ENCODE measurements at regions of chr16 and their contacts with region 1.

Region 1: DNA sequence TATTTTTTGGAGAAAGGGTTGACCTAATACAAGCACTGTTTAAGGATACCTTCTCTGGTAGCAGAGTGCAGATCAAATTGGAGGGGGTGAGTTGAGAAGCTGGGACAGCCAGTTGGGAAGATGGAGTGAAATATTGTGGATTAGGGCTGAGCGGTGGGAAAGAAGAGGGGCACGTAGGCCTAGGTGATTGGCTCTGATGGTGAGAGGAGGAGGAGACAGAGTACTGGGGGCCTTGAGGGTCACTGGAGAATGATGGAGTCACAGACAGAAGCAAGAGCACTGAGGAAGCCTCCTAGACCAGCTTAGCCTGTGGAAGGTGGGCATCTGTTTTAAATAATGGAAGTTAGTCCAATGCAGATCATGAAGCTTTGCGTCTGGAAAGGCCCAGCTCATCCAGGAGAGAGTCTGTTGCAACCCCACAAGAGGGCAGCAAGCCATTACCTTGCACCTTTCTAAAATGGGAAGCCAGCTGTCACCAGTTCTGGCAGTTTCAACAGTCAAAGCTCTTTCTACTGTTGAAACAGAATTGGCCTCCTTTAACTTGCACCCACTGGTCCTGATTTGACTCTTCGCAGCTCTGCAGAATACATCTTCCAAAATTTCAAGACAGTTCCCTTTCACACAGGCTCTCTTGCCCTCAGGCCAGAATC is 11.8 kb downstream of the SLC9A5 start:
- DNase-seq: peak; percentile 67
- H3K4me3 Mint-ChIP-seq: no peak overlapping the region
- H3K27ac Mint-ChIP-seq: no peak overlapping the region
- H3K4me1 Mint-ChIP-seq: no peaks in the 10 kb centered on the region
- H3K27me3 Mint-ChIP-seq: peaks cover 19% of the 10 kb centered on the region
- CTCF ChIP-seq: peak; percentile 69

Region 2: DNA sequence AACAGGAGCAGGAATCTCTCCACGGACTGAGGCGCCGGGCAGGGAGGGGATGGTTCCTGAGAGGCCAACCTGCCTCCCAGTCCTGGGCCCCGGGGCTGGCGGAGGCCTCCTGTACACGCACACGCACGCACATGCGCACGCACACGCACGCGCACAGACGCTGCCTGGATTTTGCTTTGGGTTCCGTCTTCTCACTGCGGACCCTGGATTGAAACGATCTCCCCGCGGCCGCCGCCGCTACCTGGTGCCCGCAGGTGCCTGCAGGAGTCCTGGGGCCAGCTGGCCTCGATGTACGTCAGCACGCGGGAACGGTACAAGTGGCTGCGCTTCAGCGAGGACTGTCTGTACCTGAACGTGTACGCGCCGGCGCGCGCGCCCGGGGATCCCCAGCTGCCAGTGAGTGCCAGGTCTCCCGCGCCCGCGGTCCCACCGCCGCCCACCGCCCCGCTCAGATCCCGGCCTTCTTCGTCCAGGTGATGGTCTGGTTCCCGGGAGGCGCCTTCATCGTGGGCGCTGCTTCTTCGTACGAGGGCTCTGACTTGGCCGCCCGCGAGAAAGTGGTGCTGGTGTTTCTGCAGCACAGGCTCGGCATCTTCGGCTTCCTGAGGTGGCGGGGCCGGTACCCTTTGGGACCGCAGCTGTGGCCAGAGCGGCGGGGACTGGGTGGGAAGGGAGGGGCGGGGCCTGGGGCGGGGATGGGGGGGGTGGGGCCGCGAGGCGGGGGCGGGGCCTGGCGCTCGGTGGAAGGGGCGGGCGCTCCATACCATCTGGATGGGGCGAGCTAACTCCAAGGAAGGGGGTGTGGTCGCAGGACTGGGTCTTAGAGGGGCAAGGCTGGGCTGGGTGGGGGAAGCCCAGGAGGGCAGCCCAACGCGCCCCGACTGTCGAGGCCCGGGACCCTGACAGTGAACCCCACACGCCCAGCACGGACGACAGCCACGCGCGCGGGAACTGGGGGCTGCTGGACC is 259.9 kb before region 1 on chr16:
- CTCF ChIA-PET with region 1: no interaction called
- POLR2A ChIA-PET with region 1: no interaction called
- intact Hi-C with region 1: no loop called
- DNase-seq: peak; percentile 27
- H3K4me3 Mint-ChIP-seq: peak overlapping the region; percentile 68
- H3K27ac Mint-ChIP-seq: peak overlapping the region; percentile 42
- H3K4me1 Mint-ChIP-seq: peaks cover 11% of the 10 kb centered on the region
- H3K27me3 Mint-ChIP-seq: no peaks in the 10 kb centered on the region
- CTCF ChIP-seq: no peak

Region 3: DNA sequence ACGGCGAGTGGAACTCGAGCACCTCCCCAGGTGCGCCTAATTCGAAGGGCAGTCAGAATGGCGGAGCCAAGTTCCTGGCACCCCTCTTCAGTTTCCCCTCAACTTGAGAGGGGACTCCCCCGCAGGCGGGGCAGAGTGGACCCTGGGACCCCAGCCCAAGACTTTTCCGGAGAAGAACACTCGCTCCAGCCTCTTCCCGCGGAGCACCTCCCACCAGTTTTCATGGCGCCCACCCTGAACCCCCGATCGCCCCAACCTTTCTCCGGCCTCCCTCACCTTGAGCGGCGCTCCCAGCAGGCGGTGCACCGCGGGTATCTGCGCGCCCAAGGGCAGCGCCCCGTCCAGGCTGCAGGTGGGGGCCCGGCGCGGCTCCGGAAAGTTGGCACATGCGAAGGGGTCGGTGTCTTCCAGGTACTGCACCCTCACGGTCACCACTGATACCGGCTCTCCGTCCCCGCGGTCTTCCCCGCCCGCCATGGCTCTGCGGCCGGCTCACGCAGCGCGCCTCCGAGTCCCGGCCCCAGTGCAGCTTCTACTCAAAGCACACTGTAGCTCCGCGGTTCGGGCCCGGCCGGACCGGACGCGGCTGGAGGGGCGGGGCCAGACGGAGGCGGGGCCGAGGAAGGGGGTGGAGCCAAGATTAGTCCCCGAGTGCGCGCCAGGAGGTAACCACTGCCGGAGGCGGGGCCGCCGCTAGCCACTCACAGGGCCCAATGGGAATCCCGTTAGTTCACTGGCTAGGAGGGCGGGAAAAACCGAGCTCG is 13.4 kb before region 1 on chr16 and contains the start of gene FHOD1:
- CTCF ChIA-PET with region 1: interaction called, 19 read pairs
- POLR2A ChIA-PET with region 1: interaction called, 5 read pairs
- intact Hi-C with region 1: no loop called
- DNase-seq: peak; percentile 97
- H3K4me3 Mint-ChIP-seq: peak within 1 kb of the TSS; percentile 81
- H3K27ac Mint-ChIP-seq: peak within 1 kb of the TSS; percentile 78
- H3K4me1 Mint-ChIP-seq: peaks cover 41% of the 10 kb centered on the region
- H3K27me3 Mint-ChIP-seq: peaks cover 18% of the 10 kb centered on the region
- CTCF ChIP-seq: no peak
- total RNA-seq, gene FHOD1: 12.1 and 14.7 TPM in 2 replicates

Region 4: DNA sequence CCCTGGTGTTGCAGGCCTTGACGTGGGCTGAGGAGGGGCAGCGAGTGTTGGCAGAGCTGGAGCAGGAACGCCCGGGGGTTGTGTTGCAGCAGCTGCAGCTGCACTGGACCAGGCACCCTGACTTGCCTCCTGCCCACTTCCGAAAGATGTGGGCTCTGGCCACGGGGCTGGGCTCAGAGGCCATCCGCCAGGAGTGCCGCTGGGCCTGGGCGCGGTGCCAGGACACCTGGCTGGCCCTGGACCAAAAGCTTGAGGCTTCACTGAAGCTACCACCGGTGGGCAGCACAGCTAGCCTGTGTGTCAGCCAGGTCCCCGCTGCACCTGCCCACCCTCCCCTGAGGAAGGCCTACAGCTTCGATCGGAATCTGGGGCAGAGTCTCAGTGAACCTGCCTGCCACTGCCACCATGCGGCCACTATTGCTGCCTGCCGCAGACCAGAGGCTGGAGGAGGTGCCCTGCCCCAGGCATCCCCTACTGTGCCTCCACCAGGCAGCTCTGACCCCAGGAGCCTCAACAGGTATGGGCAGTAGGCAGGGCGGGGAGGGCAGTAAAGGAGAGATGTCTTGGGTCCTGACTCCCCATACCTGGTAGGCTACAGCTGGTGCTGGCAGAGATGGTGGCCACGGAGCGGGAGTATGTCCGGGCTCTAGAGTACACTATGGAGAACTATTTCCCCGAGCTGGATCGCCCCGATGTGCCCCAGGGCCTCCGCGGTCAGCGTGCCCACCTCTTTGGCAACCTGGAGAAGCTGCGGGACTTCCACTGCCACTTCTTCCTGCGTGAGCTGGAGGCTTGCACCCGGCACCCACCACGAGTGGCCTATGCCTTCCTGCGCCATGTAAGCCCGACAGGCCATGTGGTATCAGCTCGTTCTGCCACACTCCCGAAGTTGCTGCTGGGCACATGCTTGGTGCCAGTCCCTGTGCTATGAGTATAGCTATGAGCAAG is 24.4 kb after region 1 on chr16:
- CTCF ChIA-PET with region 1: interaction called, 37 read pairs
- POLR2A ChIA-PET with region 1: interaction called, 7 read pairs
- intact Hi-C with region 1: loop called (anchors 1 kb)
- DNase-seq: peak; percentile 63
- H3K4me3 Mint-ChIP-seq: no peak overlapping the region
- H3K27ac Mint-ChIP-seq: no peak overlapping the region
- H3K4me1 Mint-ChIP-seq: peaks cover 15% of the 10 kb centered on the region
- H3K27me3 Mint-ChIP-seq: no peaks in the 10 kb centered on the region
- CTCF ChIP-seq: peak; percentile 49

Region 5: DNA sequence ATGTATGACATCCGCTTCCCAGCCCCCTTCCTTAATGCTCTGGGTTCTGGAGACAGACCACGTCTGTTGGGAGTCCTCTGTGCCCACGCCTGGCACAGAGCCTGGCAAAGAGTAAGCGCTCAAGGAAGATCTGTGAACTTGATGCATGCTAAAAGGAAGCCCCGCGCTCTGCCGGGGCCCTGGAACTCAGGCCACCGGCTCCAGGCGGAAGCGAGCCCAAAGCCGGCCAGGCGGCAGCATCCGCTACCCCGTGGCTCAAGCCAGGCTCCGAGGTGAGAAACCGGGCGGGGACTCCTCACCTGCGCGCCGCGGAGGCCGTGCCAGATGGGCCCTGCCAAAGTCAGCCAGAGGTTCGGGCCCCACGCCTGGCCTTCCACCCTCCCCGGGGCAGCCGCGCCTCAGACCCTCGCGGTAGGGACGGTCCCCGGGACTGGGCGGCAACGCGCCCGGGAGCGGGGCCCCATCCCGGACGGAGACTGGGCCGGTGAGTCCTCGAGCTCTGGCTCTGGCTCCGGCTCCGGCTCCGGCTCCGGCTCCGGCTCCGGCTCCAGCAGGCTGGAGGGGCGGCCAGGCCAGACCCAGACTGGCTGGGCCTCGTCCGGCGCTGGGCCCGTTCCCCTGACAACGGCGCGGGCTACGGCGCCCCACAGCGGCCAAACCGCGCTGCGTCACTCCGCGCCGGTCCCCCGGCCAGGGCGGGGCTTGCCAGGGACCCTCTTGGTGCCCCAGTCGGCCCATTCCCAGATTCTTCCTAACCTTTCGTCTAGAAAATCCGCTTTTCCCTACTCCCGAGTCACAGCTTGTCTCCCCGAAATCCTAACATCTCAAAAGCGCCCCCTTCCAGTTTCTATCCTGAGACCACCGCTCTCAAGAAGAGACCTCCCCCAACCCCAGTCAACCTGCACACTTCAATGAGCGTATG is 155.6 kb after region 1 on chr16 and contains the start of gene ZDHHC1:
- CTCF ChIA-PET with region 1: interaction called, 10 read pairs
- POLR2A ChIA-PET with region 1: interaction called, 3 read pairs
- intact Hi-C with region 1: loop called (anchors 1 kb)
- DNase-seq: peak; percentile 60
- H3K4me3 Mint-ChIP-seq: peak within 1 kb of the TSS; percentile 81
- H3K27ac Mint-ChIP-seq: peak within 1 kb of the TSS; percentile 79
- H3K4me1 Mint-ChIP-seq: peaks cover 16% of the 10 kb centered on the region
- H3K27me3 Mint-ChIP-seq: peaks cover 14% of the 10 kb centered on the region
- CTCF ChIP-seq: peak; percentile 63
- total RNA-seq, gene ZDHHC1: 5.9 and 7.6 TPM in 2 replicates

Region 6: GRCh38 chr16:67447508-67448076 is 187.0 kb after region 1 on chr16:
- CTCF ChIA-PET with region 1: interaction called, 12 read pairs
- POLR2A ChIA-PET with region 1: no interaction called
- intact Hi-C with region 1: no loop called
- DNase-seq: peak; percentile 75
- H3K4me3 Mint-ChIP-seq: no peak overlapping the region
- H3K27ac Mint-ChIP-seq: no peak overlapping the region
- H3K4me1 Mint-ChIP-seq: no peaks in the 10 kb centered on the region
- H3K27me3 Mint-ChIP-seq: no peaks in the 10 kb centered on the region
- CTCF ChIP-seq: peak; percentile 53

Region 7: GRCh38 chr16:67470359-67470758 is 209.8 kb after region 1 on chr16:
- CTCF ChIA-PET with region 1: interaction called, 11 read pairs
- POLR2A ChIA-PET with region 1: no interaction called
- intact Hi-C with region 1: loop called (anchors 2 kb)
- DNase-seq: no peak
- H3K4me3 Mint-ChIP-seq: no peak overlapping the region
- H3K27ac Mint-ChIP-seq: no peak overlapping the region
- H3K4me1 Mint-ChIP-seq: peaks cover 22% of the 10 kb centered on the region
- H3K27me3 Mint-ChIP-seq: no peaks in the 10 kb centered on the region
- CTCF ChIP-seq: no peak

Measured in MCF 10A (cell line).